Heart left ventricle (tissue), 16 donors: ENCODE measurements at regions of chr9 and their contacts with region 1.

Region 1: DNA sequence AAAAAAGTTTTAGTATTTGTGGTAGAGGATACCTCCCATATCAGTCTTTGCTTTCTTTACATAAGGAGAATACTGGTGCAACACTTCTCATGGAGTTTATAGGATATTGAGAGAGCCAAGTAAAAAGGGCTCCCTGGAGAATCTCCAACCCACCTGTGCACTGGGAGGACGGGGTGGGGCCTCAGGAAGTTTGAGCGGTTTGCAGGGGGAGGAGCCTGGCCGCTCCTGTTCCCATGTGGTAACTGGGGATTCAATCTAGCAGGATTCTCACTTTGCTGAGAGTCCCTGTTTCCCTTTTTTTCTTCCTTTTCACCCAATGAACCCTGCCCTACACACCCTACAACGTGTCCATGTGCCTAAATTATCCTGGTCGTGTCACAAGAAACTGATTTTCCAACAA is 82.8 kb downstream of the APTX start:
- DNase-seq: no peak
- ATAC-seq: no peak
- H3K4me3 ChIP-seq: no peak overlapping the region
- H3K27ac ChIP-seq: no peak overlapping the region
- H3K4me1 ChIP-seq: no peaks in the 10 kb centered on the region
- H3K27me3 ChIP-seq: peaks cover 0 to 2% (median 0%) of the 10 kb centered on the region in 9 donors
- CTCF ChIP-seq: no peak
- POLR2A ChIP-seq: no peak

Region 2: GRCh38 chr9:32820322-32820721 is 98.3 kb before region 1 on chr9:
- intact Hi-C with region 1: no loop called
- DNase-seq: no peak
- ATAC-seq: no peak
- H3K4me3 ChIP-seq: no peak overlapping the region
- H3K27ac ChIP-seq: no peak overlapping the region
- H3K4me1 ChIP-seq: no peaks in the 10 kb centered on the region
- H3K27me3 ChIP-seq: no peaks in the 10 kb centered on the region
- CTCF ChIP-seq: no peak
- POLR2A ChIP-seq: no peak

Region 3: GRCh38 chr9:32839013-32839885 is 79.4 kb before region 1 on chr9:
- intact Hi-C with region 1: loop called in 1 of 10 experiments (anchors 10 kb)
- DNase-seq: no peak
- ATAC-seq: no peak
- H3K4me3 ChIP-seq: no peak overlapping the region
- H3K27ac ChIP-seq: no peak overlapping the region
- H3K4me1 ChIP-seq: no peaks in the 10 kb centered on the region
- H3K27me3 ChIP-seq: peaks cover 0 to 6% (median 0%) of the 10 kb centered on the region in 9 donors
- CTCF ChIP-seq: no peak
- POLR2A ChIP-seq: no peak

Region 4: GRCh38 chr9:32866273-32866672 is 52.4 kb before region 1 on chr9:
- intact Hi-C with region 1: loop called in 1 of 10 experiments (anchors 10 kb)
- DNase-seq: peak in 1 of 5 donors; percentile 29
- ATAC-seq: peak in 1 of 4 donors; percentile 46
- H3K4me3 ChIP-seq: no peak overlapping the region
- H3K27ac ChIP-seq: no peak overlapping the region
- H3K4me1 ChIP-seq: peaks cover 0 to 3% (median 0%) of the 10 kb centered on the region in 12 donors
- H3K27me3 ChIP-seq: peaks cover 0 to 4% (median 0%) of the 10 kb centered on the region in 9 donors
- CTCF ChIP-seq: no peak
- POLR2A ChIP-seq: no peak